ENCODE measurements at regions of chr7 and their contacts with region 1.

Region 1: DNA sequence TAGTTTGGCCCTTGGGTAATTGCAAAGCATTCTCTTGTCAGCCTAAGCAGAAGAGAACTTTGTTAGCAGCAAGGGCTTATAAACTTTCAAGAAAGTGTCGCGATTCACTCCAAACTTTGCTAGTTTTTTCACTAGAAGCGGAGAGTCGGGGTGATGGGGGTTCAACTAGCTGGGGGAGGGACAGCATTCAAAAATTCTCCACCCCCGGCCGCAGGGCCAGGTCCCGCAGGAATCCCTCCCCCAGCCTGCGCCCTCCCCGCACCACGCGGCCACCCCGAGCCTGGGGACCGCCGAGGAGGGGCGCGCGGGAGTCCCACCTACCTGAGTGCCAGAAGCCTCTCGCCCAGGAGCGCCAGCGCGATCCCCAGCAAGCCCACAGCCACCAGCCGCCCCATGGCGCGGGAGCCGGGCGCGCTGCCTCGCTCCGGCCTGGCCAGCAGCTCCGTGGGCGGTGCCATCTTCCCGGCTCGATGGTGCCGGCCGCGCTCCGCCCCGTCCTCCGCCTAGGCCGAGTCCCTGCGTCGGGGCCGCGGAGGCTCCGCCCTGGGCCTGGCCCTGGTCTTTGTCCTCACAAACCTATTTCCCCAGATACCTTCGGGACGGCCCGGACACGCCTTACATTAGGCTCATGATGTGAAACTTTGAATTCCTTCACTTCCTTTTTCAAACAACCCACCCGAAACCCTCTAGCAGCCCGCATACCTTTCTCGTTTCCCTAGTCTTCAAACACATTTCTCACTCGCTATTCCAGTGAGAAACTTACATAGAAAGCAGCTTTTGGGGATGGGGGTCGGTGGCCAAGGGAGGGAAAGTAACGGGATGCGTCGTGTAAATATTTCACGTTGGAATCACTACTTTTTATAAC is at the start of gene PON2:
- DNase-seq: peak; percentile 72
- ATAC-seq: peak; percentile 100
- H3K4me3 ChIP-seq: peak within 1 kb of the TSS; percentile 86
- H3K27ac ChIP-seq: peak within 1 kb of the TSS; percentile 95
- H3K4me1 ChIP-seq: peaks cover 5% of the 10 kb centered on the region
- H3K27me3 ChIP-seq: no peaks in the 10 kb centered on the region
- CTCF ChIP-seq: no peak
- POLR2A ChIP-seq: peak; percentile 69
- RAD21 ChIP-seq: no peak
- total RNA-seq, gene PON2: 36.2 and 49.7 TPM in 2 replicates

Region 2: GRCh38 chr7:94436018-94436604 is 998.7 kb before region 1 on chr7:
- CTCF ChIA-PET with region 1: no interaction called
- POLR2A ChIA-PET with region 1: interaction called, 13 read pairs
- dilution Hi-C with region 1: no loop called
- in situ Hi-C with region 1: no loop called
- intact Hi-C with region 1: no loop called
- DNase-seq: peak; percentile 78
- ATAC-seq: peak; percentile 43
- H3K4me3 ChIP-seq: no peak overlapping the region
- H3K27ac ChIP-seq: no peak overlapping the region
- H3K4me1 ChIP-seq: peaks cover 8% of the 10 kb centered on the region
- H3K27me3 ChIP-seq: no peaks in the 10 kb centered on the region
- CTCF ChIP-seq: peak; percentile 81
- POLR2A ChIP-seq: no peak
- RAD21 ChIP-seq: peak; percentile 68

Region 3: DNA sequence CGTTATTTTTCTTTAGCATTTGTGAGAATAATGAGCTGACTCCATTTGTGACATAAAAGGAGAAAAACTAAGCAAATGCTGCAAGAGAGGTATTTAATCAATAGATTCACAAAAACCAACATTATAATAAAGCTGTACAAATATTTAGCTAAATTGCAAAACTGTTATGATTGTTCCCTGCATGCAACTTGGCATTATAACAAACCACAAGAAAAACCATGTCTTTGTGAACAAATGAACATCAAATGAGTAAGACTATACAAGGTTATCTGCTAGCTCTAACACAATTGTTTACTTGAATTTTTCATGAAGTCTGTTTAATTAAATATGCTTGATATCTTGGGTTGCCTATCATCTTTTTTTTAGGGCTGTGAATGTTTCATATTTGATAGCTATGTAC is 578.1 kb before region 1 on chr7:
- CTCF ChIA-PET with region 1: no interaction called
- POLR2A ChIA-PET with region 1: no interaction called
- dilution Hi-C with region 1: no loop called
- in situ Hi-C with region 1: no loop called
- intact Hi-C with region 1: no loop called
- DNase-seq: no peak
- ATAC-seq: no peak
- H3K4me3 ChIP-seq: no peak overlapping the region
- H3K27ac ChIP-seq: no peak overlapping the region
- H3K4me1 ChIP-seq: no peaks in the 10 kb centered on the region
- H3K27me3 ChIP-seq: no peaks in the 10 kb centered on the region
- CTCF ChIP-seq: no peak
- POLR2A ChIP-seq: no peak
- RAD21 ChIP-seq: no peak

Region 4: DNA sequence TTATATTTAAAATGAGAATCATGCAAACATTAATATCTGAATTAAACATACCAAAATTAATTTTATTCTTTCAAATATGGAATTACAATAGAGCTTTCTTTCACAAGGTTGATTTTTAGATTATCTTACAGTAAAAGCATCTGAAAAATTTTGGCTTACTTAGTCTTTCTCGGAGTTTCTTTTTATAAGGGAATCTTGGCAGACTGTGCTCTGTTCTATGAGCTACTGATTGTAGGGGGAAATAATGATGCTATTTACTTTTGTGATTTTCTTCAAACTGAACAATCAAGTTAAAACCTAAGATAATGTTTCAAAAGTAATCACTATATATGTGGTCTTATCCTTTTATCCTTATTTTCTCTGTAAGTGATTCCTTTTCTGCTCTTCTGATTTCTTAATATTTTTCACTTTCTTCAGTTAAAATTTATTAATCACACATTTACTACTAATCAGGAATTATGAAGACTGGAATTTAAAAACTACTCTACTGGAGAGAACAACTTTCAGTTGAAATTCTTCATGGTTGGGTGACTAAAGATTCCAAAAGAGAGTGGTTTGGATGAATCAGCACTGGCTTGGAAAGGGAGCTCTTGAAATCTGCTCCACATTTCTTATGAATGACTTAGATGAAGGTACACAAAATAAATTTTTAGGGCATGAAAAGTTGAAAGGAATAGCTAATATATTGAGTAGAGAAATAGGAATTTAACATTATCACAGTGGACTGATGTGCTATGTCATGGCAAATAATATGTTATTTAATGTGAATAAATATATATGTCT is 423.5 kb before region 1 on chr7:
- CTCF ChIA-PET with region 1: no interaction called
- POLR2A ChIA-PET with region 1: no interaction called
- dilution Hi-C with region 1: no loop called
- in situ Hi-C with region 1: no loop called
- intact Hi-C with region 1: no loop called
- DNase-seq: peak; percentile 21
- ATAC-seq: no peak
- H3K4me3 ChIP-seq: no peak overlapping the region
- H3K27ac ChIP-seq: no peak overlapping the region
- H3K4me1 ChIP-seq: no peaks in the 10 kb centered on the region
- H3K27me3 ChIP-seq: no peaks in the 10 kb centered on the region
- CTCF ChIP-seq: no peak
- POLR2A ChIP-seq: no peak
- RAD21 ChIP-seq: no peak

Region 5: GRCh38 chr7:96636979-96637378 is 1202.2 kb after region 1 on chr7:
- CTCF ChIA-PET with region 1: no interaction called
- POLR2A ChIA-PET with region 1: interaction called, 11 read pairs
- dilution Hi-C with region 1: no loop called
- in situ Hi-C with region 1: no loop called
- intact Hi-C with region 1: no loop called
- DNase-seq: no peak
- ATAC-seq: no peak
- H3K4me3 ChIP-seq: no peak overlapping the region
- H3K27ac ChIP-seq: no peak overlapping the region
- H3K4me1 ChIP-seq: no peaks in the 10 kb centered on the region
- H3K27me3 ChIP-seq: no peaks in the 10 kb centered on the region
- CTCF ChIP-seq: no peak
- POLR2A ChIP-seq: no peak
- RAD21 ChIP-seq: no peak